Activated CD4-positive, alpha-beta T cell treated with anti-CD3 and anti-CD28 coated beads, Interleukin-2, amount 10 ng/mL, durations not matched to agents 24 days and 14 days (primary cell): ENCODE measurements at regions of chr10 and their contacts with region 1.

Region 1: DNA sequence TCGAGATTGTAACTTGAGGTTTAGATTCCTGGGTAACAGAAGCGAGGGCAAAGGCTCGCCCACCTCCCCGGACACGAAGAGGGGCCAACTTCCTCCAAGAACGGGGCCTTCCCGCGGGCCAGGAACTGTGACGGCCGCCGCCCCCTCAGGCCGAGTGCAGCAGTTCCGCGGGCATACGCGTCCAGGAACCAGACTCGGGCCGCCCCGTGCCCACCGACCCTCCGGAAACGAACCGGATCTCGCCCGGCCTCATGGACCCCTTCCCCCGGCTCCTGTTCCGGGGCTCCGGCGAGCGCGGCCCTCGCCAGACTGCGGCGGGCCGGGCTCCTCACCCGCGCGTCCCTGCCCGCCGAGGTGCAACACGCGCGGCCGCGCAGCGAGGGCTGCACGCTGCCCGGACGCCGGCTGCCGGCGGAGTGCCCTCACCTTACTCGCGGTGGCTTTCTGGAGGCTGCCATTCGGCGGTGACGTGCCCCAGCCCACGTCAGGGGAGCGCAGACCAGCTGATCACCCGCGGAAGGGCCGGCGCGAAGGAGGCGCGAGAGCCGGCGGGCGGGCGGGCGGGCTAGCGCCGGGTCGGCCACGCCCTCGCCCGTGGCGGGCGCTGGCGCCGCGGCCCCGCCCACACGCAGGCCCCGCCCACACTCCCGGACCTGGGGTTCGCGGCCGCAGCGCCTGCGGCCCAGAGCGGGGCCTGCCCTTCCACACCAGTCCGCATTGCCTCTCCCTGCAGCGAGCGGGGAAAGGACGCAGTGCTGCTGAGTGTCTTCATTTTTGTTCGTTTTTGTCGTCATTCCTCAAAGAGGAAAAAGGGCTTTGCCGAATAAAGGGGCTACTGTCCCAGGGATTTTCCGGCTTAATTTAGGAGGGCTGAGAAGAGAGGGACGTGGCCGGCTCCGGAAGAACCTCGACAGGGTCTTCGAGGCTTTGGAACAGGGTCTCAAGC is at the start of gene XPNPEP1:
- DNase-seq: peak; percentile 95
- H3K4me3 Mint-ChIP-seq: peak within 1 kb of the TSS; percentile 95
- H3K27ac Mint-ChIP-seq: peak within 1 kb of the TSS; percentile 93
- H3K4me1 Mint-ChIP-seq: peaks cover 49% of the 10 kb centered on the region
- H3K27me3 Mint-ChIP-seq: peaks cover 4% of the 10 kb centered on the region
- total RNA-seq, gene XPNPEP1: 98.9 and 105 TPM in 2 replicates

Region 2: GRCh38 chr10:109883859-109884771 is 39.1 kb before region 1 on chr10:
- intact Hi-C with region 1: loop called (anchors 5 kb)
- DNase-seq: peak; percentile 87
- H3K4me3 Mint-ChIP-seq: no peak overlapping the region
- H3K27ac Mint-ChIP-seq: no peak overlapping the region
- H3K4me1 Mint-ChIP-seq: peaks cover 13% of the 10 kb centered on the region
- H3K27me3 Mint-ChIP-seq: no peaks in the 10 kb centered on the region

Region 3: GRCh38 chr10:110076559-110077318 is 153.5 kb after region 1 on chr10:
- intact Hi-C with region 1: loop called (anchors 5 kb)
- DNase-seq: peak; percentile 82
- H3K4me3 Mint-ChIP-seq: peak overlapping the region; percentile 85
- H3K27ac Mint-ChIP-seq: peak overlapping the region; percentile 95
- H3K4me1 Mint-ChIP-seq: peaks cover 77% of the 10 kb centered on the region
- H3K27me3 Mint-ChIP-seq: no peaks in the 10 kb centered on the region

Region 4: DNA sequence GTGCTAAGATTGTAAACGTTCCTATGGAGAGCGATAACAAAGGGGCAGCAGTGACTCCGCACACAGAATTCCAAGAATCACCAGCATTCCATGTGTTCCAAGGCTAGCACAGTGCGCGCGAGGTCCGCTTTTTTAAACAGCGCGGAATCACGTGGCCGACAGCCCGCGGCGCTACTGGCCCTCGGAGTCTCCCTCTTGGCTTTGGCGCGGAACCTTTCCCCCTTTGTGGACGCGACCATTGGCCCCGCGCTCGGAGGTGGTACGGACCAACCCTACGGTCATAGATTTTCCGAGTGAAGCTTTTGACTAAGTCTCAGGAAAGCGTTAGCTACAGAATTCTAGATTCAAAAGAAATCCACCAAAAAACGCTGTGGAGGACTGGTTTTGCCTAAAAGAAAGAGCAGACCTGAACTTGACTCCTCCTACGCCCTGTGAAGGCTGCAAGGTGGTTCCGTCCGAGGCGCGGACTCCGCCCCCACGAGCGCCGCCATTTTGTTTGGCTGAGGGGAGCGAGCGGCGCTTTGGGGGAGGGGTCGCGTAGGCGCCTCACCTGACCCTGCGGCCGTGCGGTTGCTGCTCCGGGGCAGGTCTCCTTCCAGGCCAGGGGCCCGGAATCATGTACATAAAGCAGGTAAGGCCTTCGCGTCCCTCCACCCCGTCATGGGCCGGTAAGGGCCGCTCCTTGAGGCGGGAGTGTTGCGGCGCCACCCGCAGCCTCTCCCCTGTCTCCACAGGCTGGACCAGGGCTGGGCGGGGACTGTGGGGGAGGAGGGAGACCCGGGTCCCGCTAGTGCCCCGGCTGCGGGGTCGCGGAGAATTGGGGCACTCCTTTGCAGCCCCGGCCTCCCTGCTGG is 644.2 kb after region 1 on chr10 and contains the start of gene SMC3:
- intact Hi-C with region 1: loop called (anchors 10 kb)
- DNase-seq: peak; percentile 98
- H3K4me3 Mint-ChIP-seq: peak within 1 kb of the TSS; percentile 97
- H3K27ac Mint-ChIP-seq: peak within 1 kb of the TSS; percentile 98
- H3K4me1 Mint-ChIP-seq: peaks cover 32% of the 10 kb centered on the region
- H3K27me3 Mint-ChIP-seq: peaks cover 21% of the 10 kb centered on the region
- total RNA-seq, gene SMC3: 82.2 and 87.3 TPM in 2 replicates